Panc1 (cell line): ENCODE measurements at regions of chr1 and their contacts with region 1.

Region 1: GRCh38 chr1:156445789-156446263 is 54.7 kb downstream of the MEF2D start:
- DNase-seq: peak; percentile 67
- ATAC-seq: peak; percentile 94
- H3K4me3 ChIP-seq: no peak overlapping the region
- H3K27ac ChIP-seq: no peak overlapping the region
- H3K4me1 ChIP-seq: no peaks in the 10 kb centered on the region
- H3K27me3 ChIP-seq: peaks cover 10% of the 10 kb centered on the region
- CTCF ChIP-seq: peak; percentile 96

Region 2: GRCh38 chr1:156356875-156357534 is 88.8 kb before region 1 on chr1:
- CTCF ChIA-PET with region 1: interaction called, 15 read pairs
- POLR2A ChIA-PET with region 1: interaction called, 3 read pairs
- in situ Hi-C with region 1: no loop called
- intact Hi-C with region 1: no loop called
- DNase-seq: no peak
- ATAC-seq: peak; percentile 95
- H3K4me3 ChIP-seq: no peak overlapping the region; a peak in 1 of 4 replicates
- H3K27ac ChIP-seq: no peak overlapping the region
- H3K4me1 ChIP-seq: no peaks in the 10 kb centered on the region
- H3K27me3 ChIP-seq: no peaks in the 10 kb centered on the region
- CTCF ChIP-seq: peak; percentile 98

Region 3: GRCh38 chr1:156592158-156592909 is 146.5 kb after region 1 on chr1:
- CTCF ChIA-PET with region 1: interaction called, 4 read pairs
- POLR2A ChIA-PET with region 1: interaction called, 13 read pairs
- in situ Hi-C with region 1: no loop called
- intact Hi-C with region 1: no loop called
- DNase-seq: no peak
- ATAC-seq: no peak; the same call in 1 of the 2 replicates
- H3K4me3 ChIP-seq: peak overlapping the region; percentile 71 to 84
- H3K27ac ChIP-seq: peak overlapping the region; percentile 92
- H3K4me1 ChIP-seq: peaks cover 24% of the 10 kb centered on the region
- H3K27me3 ChIP-seq: no peaks in the 10 kb centered on the region
- CTCF ChIP-seq: no peak